Heart right ventricle (tissue), 16 donors: ENCODE measurements at regions of chr12 and their contacts with region 1.

Region 1: GRCh38 chr12:62793256-62794217 is 141.4 kb downstream of the PPM1H start:
- DNase-seq: peak; percentile 85 to 86
- ATAC-seq: peak; percentile 56 to 85 (median 76)
- H3K4me3 ChIP-seq: no peak overlapping the region
- H3K27ac ChIP-seq: peak overlapping the region in 4 of 10 donors; percentile 9 to 61 (median 24)
- H3K4me1 ChIP-seq: peaks cover 0 to 56% (median 32%) of the 10 kb centered on the region in 9 donors
- H3K27me3 ChIP-seq: no peaks in the 10 kb centered on the region
- CTCF ChIP-seq: peak; percentile 91 to 98 (median 96)

Region 2: DNA sequence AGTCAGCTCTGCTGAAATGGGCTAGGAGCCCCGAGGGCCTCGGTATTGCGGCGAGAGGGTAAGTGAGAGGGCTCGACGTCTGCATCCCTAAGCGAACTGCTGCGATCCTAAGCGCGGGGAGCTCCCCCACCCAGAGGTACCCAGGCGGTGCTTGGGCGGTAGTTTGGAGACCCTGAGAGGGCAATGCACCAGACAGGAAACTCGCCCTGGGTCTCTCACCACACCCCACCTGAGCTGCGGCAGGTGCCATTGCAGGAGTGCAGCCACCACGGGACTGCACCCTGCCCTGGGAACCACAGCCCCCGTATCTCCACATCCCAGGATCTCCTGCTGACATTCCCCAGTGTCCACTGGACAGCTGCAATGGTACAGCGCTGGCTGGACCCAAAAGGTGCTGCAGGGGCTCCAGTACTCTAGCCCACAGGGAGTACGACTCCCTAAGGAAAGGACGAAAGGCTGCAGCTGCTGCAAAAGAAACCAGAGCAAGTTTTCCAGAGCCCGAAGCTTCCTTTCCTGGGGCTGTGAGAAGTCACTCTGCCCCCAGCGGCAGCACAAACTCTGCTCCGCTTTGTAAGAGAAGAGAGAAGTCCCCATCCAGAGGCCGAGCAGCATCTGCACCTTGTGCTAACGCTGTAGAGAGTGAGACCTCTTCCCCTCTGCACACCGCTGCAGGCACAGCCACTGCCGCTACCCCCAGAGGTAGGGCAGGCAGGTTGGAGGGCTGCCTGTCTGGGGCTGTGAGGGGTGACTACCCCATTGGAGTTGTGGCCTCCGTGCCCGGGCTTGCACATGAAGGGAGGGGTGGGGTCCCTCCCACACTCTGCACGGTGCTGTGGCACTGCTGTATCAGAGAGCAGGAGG is 358.0 kb before region 1 on chr12:
- intact Hi-C with region 1: loop called in 8 of 10 experiments (anchors 2 to 5 kb)
- DNase-seq: peak; percentile 16 to 29
- ATAC-seq: peak; percentile 46 to 85 (median 81)
- H3K4me3 ChIP-seq: peak overlapping the region in 9 of 10 donors; percentile 34 to 60 (median 54)
- H3K27ac ChIP-seq: no peak overlapping the region
- H3K4me1 ChIP-seq: peaks cover 0 to 18% (median 13%) of the 10 kb centered on the region in 9 donors
- H3K27me3 ChIP-seq: peaks cover 0 to 43% (median 35%) of the 10 kb centered on the region in 7 donors
- CTCF ChIP-seq: peak in 7 of 9 donors; percentile 19 to 64 (median 55)

Region 3: GRCh38 chr12:62581288-62582064 is 212.1 kb before region 1 on chr12:
- intact Hi-C with region 1: loop called in 8 of 10 experiments (anchors 1 to 5 kb)
- DNase-seq: peak; percentile 4 to 31
- ATAC-seq: peak; percentile 69 to 92 (median 86)
- H3K4me3 ChIP-seq: no peak overlapping the region
- H3K27ac ChIP-seq: peak overlapping the region in 2 of 10 donors; percentile 13 to 37
- H3K4me1 ChIP-seq: peaks cover 0 to 9% (median 0%) of the 10 kb centered on the region in 9 donors
- H3K27me3 ChIP-seq: no peaks in the 10 kb centered on the region
- CTCF ChIP-seq: peak; percentile 38 to 82 (median 73)

Region 4: DNA sequence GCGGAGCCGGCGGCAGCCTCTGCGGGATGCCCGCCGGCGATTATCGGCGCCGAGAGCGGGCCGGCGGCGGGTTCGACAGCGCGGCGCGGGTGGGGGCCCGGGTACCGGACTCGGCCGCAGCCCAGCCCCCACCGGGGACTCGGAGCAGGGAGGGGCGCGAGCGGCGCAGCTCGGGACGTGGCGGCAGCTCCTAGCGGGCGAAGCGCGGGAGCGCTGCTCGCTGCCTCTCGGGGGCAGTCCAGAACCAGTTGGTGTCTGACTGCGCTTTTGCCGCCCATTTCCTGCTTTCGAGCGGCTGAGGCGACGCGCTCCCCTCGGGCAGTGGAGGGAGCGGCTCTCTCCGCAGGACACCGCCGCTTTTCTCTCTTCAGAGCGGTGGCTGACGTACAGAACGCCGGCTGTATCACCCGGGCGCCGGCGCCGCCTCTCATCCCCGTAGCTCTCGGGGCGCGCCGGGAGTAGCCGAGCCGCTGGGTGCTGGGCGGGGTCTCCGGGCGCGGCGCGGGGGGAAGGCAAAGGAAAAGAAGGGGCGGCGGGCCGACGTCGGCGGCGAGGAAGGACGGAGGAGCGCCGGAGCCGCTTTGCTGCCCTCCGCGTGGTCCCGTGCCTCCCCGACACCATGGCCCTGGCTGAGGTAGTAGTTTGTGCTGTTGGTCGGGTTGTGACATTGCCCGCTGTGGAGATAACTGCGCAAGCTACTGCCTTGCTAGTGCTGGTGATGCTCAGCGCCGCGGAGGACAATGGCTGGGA is 190.3 kb before region 1 on chr12:
- intact Hi-C with region 1: loop called in 8 of 10 experiments (anchors 1 to 5 kb)
- DNase-seq: peak; percentile 86 to 87
- ATAC-seq: peak; percentile 90 to 98 (median 93)
- H3K4me3 ChIP-seq: peak overlapping the region; percentile 55 to 97 (median 80)
- H3K27ac ChIP-seq: peak overlapping the region; percentile 99 to 100 (median 100)
- H3K4me1 ChIP-seq: peaks cover 0 to 45% (median 20%) of the 10 kb centered on the region in 9 donors
- H3K27me3 ChIP-seq: no peaks in the 10 kb centered on the region
- CTCF ChIP-seq: peak; percentile 29 to 79 (median 52)

Region 5: DNA sequence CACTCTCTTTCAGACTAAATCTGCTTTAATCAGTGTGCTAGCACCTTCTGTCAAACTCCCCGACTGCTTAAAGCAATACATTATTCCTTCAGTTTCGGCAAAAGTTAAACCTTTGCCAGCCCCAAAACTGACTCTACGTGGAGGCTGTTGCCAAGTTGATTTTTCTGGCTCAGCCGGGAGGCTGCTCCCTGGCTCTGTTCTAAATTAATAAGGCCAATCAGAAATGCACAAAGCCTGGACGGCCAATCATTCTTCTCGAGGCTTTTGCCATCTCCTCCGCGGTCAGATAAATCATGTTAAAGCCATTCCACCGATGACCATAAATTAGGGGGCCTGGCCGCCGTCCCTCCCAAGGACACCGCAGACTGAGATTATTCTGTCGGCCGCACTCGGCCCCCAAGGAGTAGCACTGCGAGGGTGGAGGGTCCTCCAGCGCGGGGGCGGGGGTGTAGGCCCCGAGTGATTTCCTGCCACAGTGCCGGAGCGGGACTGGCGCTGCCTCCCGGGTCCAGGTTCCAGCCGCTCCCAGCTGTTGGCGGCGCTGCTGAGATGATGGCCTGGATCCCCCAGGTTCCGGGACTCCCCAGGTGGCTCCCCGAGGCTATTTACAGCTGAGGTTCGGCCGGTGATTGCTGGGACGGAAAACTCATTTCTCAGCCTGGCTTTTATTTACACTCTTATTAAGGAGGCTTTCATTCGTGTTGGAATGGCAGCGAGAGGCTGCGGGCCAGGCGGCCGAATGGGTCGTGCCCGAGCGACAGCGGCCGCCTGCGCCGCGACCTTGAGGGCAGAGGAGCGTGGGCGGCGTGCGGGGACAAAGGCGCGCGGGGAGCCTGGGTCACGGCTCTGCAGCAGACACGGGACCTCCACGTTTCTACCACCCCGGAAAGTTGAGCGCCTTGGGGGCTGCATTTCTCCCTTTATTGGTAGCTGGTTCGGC is 161.8 kb before region 1 on chr12:
- intact Hi-C with region 1: loop called in 2 of 10 experiments (anchors 2 to 5 kb)
- DNase-seq: peak; percentile 60 to 66
- ATAC-seq: peak; percentile 84 to 92 (median 88)
- H3K4me3 ChIP-seq: peak overlapping the region; percentile 46 to 70 (median 63)
- H3K27ac ChIP-seq: peak overlapping the region in 9 of 10 donors; percentile 54 to 83 (median 66)
- H3K4me1 ChIP-seq: peaks cover 0 to 20% (median 15%) of the 10 kb centered on the region in 9 donors
- H3K27me3 ChIP-seq: peaks cover 0 to 50% (median 0%) of the 10 kb centered on the region in 7 donors
- CTCF ChIP-seq: peak in 7 of 9 donors; percentile 22 to 64 (median 41)